RWPE1 (cell line): ENCODE measurements at regions of chr7 and their contacts with region 1.

Region 1: DNA sequence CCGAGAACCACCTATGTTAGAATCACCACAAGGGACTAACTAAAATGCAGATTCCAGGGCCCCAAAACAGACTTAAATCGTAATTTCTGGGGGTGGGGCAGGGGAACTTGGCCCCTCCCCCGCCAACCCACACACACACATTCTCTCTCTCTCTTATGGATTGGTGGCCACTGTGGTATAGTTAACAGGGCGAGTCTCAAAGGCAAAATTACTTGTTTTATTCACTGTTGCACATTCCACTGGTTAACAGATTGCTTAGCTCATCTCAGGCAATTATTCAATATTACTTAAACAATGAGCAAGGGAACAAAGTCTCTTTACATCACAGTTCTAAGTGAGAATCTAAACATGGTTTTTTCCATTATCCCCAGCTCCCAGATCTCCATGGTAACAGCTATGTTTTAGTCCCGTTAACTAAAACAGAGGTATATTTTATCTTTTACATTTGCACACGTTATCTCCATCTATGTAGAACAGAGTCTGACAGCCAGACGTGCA is 38.5 kb downstream of the IGF2BP3 start:
- DNase-seq: no peak
- H3K27ac ChIP-seq: no peak overlapping the region
- CTCF ChIP-seq: no peak

Region 2: DNA sequence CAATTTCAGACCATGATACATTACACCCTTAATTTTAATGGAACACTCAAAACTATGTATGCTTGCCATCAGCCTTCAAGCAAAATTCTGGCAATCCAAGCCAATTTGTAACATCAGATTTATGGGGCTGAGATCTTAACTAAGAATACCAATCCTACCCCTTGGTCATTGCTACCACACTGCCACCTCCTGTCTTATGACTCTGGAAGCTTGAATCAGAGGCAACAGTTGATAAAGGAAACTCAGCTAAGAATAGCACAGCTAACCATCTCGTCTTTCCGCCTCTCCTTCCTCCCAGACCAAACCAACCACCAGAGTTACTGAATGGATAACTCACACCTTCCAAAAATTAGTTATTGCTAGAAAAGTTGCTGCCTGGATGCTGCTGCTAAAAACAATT is 31.1 kb after region 1 on chr7:
- CTCF ChIA-PET with region 1: interaction called, 20 read pairs
- POLR2A ChIA-PET with region 1: no interaction called
- DNase-seq: no peak
- H3K27ac ChIP-seq: no peak overlapping the region
- CTCF ChIP-seq: no peak

Region 3: GRCh38 chr7:23783115-23783514 is 351.4 kb after region 1 on chr7:
- CTCF ChIA-PET with region 1: no interaction called
- POLR2A ChIA-PET with region 1: no interaction called
- DNase-seq: no peak
- H3K27ac ChIP-seq: no peak overlapping the region
- CTCF ChIP-seq: no peak